Ascending aorta (tissue), 2 donors: ENCODE measurements at regions of chr2 and their contacts with region 1.

Region 1: DNA sequence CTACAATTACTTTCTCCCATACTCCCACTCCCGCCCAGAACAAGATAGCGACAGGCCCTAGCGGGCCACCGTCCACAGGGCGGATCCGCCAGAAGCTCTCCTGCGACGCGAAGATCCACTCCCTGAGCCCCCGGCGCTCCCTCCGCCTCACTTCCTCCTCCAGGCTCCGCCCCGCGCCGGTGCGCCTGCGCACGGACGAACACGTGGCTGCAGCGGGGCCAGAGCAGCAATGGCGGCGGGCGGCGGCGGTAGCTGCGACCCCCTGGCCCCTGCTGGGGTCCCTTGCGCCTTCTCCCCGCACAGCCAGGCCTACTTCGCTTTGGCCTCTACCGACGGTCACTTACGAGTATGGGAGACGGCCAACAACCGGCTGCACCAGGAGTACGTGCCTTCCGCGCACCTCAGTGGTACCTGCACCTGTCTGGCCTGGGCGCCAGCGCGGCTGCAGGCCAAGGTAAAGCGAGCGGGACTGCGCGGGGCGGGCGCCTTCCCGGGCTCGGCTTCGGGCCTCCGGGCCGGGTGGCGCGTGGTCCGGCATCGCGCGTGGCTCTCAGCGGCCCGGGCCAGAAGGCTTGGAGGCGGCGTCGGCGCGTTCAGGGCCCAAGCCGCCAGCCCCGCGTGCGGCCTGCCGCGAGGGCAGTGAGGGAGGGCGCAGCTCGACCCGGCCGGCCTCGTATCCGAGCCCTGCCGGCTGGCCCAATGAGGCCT is at the start of gene WDR43:
- DNase-seq: peak; percentile 89 to 98
- H3K4me3 ChIP-seq: peak within 1 kb of the TSS; percentile 96 to 100
- H3K27ac ChIP-seq: peak within 1 kb of the TSS; percentile 81 to 87
- H3K4me1 ChIP-seq: peaks cover 0 to 8% of the 10 kb centered on the region in 2 donors
- H3K27me3 ChIP-seq: no peaks in the 10 kb centered on the region
- CTCF ChIP-seq: no peak
- total RNA-seq, gene WDR43: 21.5 TPM

Region 2: DNA sequence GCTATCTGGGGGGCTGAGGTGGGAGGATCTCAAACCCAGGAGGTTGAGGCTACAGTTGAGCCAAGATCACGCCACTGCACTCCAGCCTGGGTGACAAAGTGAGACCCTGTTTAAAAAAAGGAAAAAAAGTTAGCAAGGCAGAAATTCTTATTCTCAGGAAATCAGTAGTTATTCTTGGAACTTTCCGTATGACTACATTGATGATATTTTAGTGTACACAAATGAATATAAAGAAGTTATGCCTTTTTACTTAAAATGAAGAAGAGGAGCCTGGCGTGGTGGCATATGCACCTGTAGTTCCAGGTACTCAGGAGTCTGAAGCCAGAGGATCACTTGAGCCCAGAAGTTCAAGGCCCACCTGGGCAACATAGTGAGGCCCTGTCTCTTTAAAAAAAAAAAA is 76.6 kb before region 1 on chr2:
- intact Hi-C with region 1: loop called (anchors 2 kb)
- DNase-seq: no peak
- H3K4me3 ChIP-seq: no peak overlapping the region
- H3K27ac ChIP-seq: no peak overlapping the region
- H3K4me1 ChIP-seq: no peaks in the 10 kb centered on the region
- H3K27me3 ChIP-seq: no peaks in the 10 kb centered on the region
- CTCF ChIP-seq: no peak

Region 3: GRCh38 chr2:28870146-28870891 is 24.3 kb before region 1 on chr2 and contains the start of gene TRMT61B:
- intact Hi-C with region 1: loop called (anchors 1 kb)
- DNase-seq: peak; percentile 87 to 98
- H3K4me3 ChIP-seq: peak within 1 kb of the TSS; percentile 85 to 89
- H3K27ac ChIP-seq: peak within 1 kb of the TSS; percentile 62 to 77
- H3K4me1 ChIP-seq: peaks cover 0 to 11% of the 10 kb centered on the region in 2 donors
- H3K27me3 ChIP-seq: no peaks in the 10 kb centered on the region
- CTCF ChIP-seq: no peak
- total RNA-seq, gene TRMT61B: not detected